CD14-positive monocyte (primary cell): ENCODE measurements at regions of chr17 and their contacts with region 1.

Region 1: GRCh38 chr17:35088881-35089585 is 25.5 kb upstream of the RFFL start:
- DNase-seq: peak; percentile 76 to 87 (median 85)
- H3K4me3 ChIP-seq: peak overlapping the region; percentile 88 to 100 (median 90)
- H3K4me3 Mint-ChIP-seq: peak overlapping the region; percentile 91 to 97
- H3K27ac ChIP-seq: peak overlapping the region; percentile 78 to 92
- H3K27ac Mint-ChIP-seq: peak overlapping the region; percentile 89 to 97 (median 94)
- H3K4me1 ChIP-seq: peaks cover 21 to 28% of the 10 kb centered on the region in 2 donors
- H3K4me1 Mint-ChIP-seq: peaks cover 30% of the 10 kb centered on the region
- H3K27me3 ChIP-seq: no peaks in the 10 kb centered on the region
- H3K27me3 Mint-ChIP-seq: peaks cover 0 to 2% (median 0%) of the 10 kb centered on the region in 3 donors
- CTCF ChIP-seq: peak; percentile 83

Region 2: DNA sequence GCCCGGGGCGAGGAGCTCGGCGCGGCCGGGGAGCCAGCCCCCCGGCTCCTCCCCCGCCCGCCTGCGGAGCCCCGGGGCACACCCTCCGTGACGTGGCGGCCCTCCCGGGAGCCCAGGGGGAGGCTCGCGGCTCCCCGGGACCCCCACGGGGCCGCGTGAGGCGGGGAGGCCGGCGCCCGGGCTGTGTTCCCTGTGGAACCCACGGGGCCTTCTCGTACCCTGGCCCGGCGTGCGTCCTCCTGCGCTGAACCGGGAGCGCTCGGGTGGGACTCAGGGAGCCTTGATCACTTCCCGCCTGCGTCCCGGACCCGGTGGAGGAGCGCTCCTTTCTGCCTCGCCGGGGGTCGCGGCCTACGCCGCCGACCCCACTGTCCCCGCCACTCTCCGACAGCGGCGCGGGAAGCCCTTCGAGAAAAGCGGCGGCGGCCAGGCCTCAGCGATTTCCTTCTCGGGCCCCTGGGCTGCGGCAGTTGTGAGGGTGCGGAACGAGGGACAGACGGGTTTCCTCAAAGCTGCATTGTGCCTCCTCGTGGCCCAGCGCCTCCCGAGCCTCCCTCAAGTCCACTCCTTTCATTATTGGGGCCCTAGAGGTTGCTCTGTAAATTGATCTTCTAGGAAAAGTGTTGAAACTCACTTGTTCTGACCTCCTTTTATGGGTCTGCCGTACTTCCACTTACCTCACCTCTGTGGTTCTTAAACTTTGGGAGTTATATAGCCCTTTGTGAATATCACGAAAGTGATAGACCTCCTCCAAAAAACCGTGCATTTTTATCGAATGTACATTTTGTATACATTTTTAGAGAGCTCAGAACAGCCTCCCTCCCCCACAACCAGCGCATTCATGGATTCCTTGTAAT is 108.1 kb before region 1 on chr17:
- intact Hi-C with region 1: loop called in 1 of 2 experiments (anchors 5 kb)
- DNase-seq: peak; percentile 70 to 79 (median 75)
- H3K4me3 ChIP-seq: peak overlapping the region; percentile 68 to 86 (median 83)
- H3K4me3 Mint-ChIP-seq: peak overlapping the region; percentile 82 to 90
- H3K27ac ChIP-seq: peak overlapping the region; percentile 94
- H3K27ac Mint-ChIP-seq: peak overlapping the region; percentile 88 to 96 (median 94)
- H3K4me1 ChIP-seq: peaks cover 16 to 22% of the 10 kb centered on the region in 2 donors
- H3K4me1 Mint-ChIP-seq: peaks cover 29% of the 10 kb centered on the region
- H3K27me3 ChIP-seq: no peaks in the 10 kb centered on the region
- H3K27me3 Mint-ChIP-seq: peaks cover 0 to 4% (median 3%) of the 10 kb centered on the region in 3 donors
- CTCF ChIP-seq: peak; percentile 42

Region 3: DNA sequence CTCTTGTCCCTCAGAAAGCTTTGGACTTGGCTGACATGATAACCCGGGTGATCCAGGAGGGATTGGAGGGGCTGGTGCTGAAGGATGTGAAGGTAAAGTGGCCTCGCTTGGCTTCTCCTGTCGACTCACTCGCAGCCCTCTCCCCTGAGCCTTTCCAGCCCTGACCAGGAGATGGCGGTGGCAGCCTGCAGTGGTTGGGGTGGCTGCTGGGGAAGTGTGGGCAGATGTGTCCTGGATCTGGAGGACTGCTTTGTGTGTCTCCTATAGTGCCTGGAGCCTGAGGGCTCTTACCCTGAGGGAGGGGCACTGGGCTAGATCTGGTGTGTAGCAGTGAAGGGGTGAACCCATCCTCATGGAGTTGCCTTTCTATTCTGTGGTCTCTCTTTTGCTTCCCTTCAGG is 90.8 kb before region 1 on chr17:
- intact Hi-C with region 1: loop called (anchors 1 to 2 kb)
- DNase-seq: peak; percentile 66 to 74 (median 69)
- H3K4me3 ChIP-seq: no peak overlapping the region
- H3K4me3 Mint-ChIP-seq: no peak overlapping the region
- H3K27ac ChIP-seq: no peak overlapping the region
- H3K27ac Mint-ChIP-seq: peak overlapping the region in 4 of 7 donors; percentile 50 to 61 (median 57)
- H3K4me1 ChIP-seq: peaks cover 25 to 29% of the 10 kb centered on the region in 2 donors
- H3K4me1 Mint-ChIP-seq: peaks cover 35% of the 10 kb centered on the region
- H3K27me3 ChIP-seq: no peaks in the 10 kb centered on the region
- H3K27me3 Mint-ChIP-seq: no peaks in the 10 kb centered on the region
- CTCF ChIP-seq: peak; percentile 89

Region 4: DNA sequence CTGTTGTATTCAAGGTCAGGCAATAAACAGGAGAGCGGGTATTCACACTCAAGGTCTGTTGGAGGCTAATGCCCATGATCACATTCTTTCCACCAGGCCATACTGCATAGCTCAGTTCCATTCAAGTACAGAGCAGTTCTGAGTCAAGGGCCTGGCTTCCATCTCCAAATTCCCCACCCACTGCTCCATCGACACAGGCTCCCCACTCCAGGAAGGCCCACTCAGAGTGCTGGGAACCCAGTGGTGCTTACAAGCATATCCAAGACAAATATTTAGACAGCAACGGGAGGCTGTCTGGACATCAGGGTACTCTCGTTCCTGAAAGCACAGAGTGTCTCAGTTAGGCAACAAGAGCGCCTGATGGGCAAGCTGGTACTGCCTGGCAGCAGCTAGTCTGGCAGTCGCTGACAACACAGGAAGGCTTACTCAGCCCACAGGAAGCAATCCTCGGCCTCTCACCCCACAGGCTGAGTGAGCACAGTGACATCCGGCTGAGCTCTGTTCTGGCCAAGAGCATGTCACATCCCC is 66.4 kb before region 1 on chr17:
- intact Hi-C with region 1: loop called (anchors 2 to 5 kb)
- DNase-seq: peak; percentile 78 to 91 (median 89)
- H3K4me3 ChIP-seq: no peak overlapping the region
- H3K4me3 Mint-ChIP-seq: peak overlapping the region in 1 of 2 donors; percentile 65
- H3K27ac ChIP-seq: peak overlapping the region; percentile 36 to 67
- H3K27ac Mint-ChIP-seq: peak overlapping the region; percentile 58 to 96 (median 89)
- H3K4me1 ChIP-seq: peaks cover 12 to 17% of the 10 kb centered on the region in 2 donors
- H3K4me1 Mint-ChIP-seq: peaks cover 18% of the 10 kb centered on the region
- H3K27me3 ChIP-seq: no peaks in the 10 kb centered on the region
- H3K27me3 Mint-ChIP-seq: peaks cover 0 to 3% (median 0%) of the 10 kb centered on the region in 3 donors
- CTCF ChIP-seq: no peak

Region 5: GRCh38 chr17:35046740-35047283 is 42.2 kb before region 1 on chr17:
- intact Hi-C with region 1: loop called (anchors 5 kb)
- DNase-seq: peak in 1 of 3 donors; percentile 48
- H3K4me3 ChIP-seq: peak overlapping the region in 1 of 3 experiments; percentile 12
- H3K4me3 Mint-ChIP-seq: peak overlapping the region in 1 of 2 donors; percentile 43
- H3K27ac ChIP-seq: peak overlapping the region in 1 of 2 donors; percentile 53
- H3K27ac Mint-ChIP-seq: peak overlapping the region in 4 of 7 donors; percentile 42 to 85 (median 64)
- H3K4me1 ChIP-seq: peaks cover 37 to 42% of the 10 kb centered on the region in 2 donors
- H3K4me1 Mint-ChIP-seq: peaks cover 42% of the 10 kb centered on the region
- H3K27me3 ChIP-seq: no peaks in the 10 kb centered on the region
- H3K27me3 Mint-ChIP-seq: no peaks in the 10 kb centered on the region
- CTCF ChIP-seq: no peak

Region 6: DNA sequence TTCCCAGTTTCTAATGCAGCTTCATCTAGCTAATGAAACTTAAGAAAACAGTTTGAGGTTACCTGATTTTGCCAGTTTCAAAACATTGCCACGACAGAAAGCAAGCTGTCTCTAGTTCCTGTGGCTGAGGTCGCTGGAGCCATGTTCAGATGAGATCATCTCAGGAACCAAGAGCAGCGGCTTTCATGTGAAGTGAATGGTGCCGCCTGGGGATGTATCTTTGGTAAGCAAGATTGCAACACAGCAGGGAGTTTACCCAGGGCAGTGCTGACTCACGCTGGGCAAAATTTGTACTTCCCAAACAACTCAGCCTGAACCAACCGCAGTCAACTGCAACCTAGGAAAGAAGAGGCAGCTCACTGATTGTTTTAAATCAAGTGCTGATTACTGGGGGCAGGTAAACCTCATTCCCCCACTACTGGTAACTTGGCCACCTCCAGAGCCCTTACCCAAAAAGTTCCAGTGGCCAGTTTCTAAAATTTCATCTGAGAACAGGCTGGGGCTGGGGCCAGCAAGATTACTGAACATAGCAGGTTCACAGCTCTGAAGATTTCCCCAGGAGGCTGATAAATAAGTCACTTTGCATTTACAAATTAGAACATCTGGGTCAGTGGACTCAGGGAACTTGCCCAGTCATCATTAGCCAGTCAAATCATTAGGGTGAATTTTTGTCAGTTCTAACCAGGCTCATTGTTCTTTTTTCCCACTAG is 25.4 kb before region 1 on chr17 and contains the start of gene RFFL:
- intact Hi-C with region 1: loop called in 1 of 2 experiments (anchors 2 kb)
- DNase-seq: peak; percentile 95 to 99 (median 98)
- H3K4me3 ChIP-seq: peak within 1 kb of the TSS; percentile 30 to 81 (median 61)
- H3K4me3 Mint-ChIP-seq: peak within 1 kb of the TSS; percentile 71 to 73
- H3K27ac ChIP-seq: peak within 1 kb of the TSS; percentile 93 to 96
- H3K27ac Mint-ChIP-seq: peak within 1 kb of the TSS; percentile 95 to 99 (median 97)
- H3K4me1 ChIP-seq: peaks cover 43 to 58% of the 10 kb centered on the region in 2 donors
- H3K4me1 Mint-ChIP-seq: peaks cover 67% of the 10 kb centered on the region
- H3K27me3 ChIP-seq: no peaks in the 10 kb centered on the region
- H3K27me3 Mint-ChIP-seq: no peaks in the 10 kb centered on the region
- CTCF ChIP-seq: no peak
- polyA plus RNA-seq, gene RFFL: 16.1 to 25.1 (median 24.7) TPM